ENCODE measurements at regions of chr16 and their contacts with region 1.

Region 1: GRCh38 chr16:28950648-28951409 is at the start of gene NFATC2IP:
- DNase-seq: peak; percentile 99
- H3K4me3 ChIP-seq: peak within 1 kb of the TSS; percentile 68 to 100 (median 94)
- H3K27ac ChIP-seq: peak within 1 kb of the TSS; percentile 74 to 95 (median 90)
- H3K4me1 ChIP-seq: peaks cover 10 to 55% (median 36%) of the 10 kb centered on the region in 6 donors
- H3K27me3 ChIP-seq: no peaks in the 10 kb centered on the region
- CTCF ChIP-seq: peak in 2 of 11 experiments; percentile 29 to 31
- POLR2A ChIP-seq: peak in 1 of 3 donors; percentile 63
- total RNA-seq, gene NFATC2IP: 44.3 to 63.5 (median 54.5) TPM

Region 2: DNA sequence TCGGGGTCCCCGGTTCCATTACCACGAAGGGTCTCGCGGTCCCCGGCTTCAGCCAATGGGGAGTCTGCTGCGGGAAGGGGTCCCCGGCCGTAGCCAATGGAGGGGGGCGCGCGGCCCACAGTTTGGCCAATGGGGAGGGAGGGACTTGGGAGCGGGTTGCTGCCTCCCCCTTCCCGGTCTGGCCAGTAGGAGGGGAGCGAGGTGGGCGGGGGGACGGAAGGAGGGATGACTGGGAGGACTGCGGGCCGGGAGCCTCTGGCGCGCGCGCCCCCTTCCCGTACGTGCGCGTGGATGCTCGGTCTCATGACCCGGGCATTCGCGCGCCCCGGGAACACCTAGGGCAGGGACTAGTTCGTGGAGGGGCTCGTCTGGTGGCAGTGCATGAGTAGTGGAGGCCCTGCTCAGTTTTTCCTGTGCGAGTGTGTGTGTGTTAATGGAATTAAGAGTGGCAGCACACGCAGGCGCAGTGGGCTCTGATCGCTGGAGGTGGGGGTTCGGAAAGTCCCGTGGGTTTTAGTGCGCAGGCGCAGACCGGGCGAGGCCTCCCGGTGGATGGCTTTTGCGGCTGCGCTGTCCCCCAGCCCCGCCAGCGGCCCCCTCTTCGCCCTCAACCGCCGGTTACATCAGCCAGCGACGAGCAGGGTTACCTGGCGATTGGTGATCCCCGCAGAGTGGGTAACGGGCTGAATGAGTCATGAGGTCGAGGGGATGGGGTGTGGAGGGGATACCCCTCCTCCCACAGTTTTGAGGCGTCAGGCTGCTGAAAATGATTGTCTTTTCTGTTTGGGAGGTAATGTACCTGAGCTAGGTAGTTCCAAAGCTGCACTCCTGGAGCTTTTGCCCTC is 126.7 kb before region 1 on chr16:
- intact Hi-C with region 1: loop called (anchors 5 kb)
- DNase-seq: peak; percentile 97
- H3K4me3 ChIP-seq: peak overlapping the region; percentile 92 to 100 (median 98)
- H3K27ac ChIP-seq: peak overlapping the region; percentile 96 to 100 (median 99)
- H3K4me1 ChIP-seq: peaks cover 13 to 72% (median 33%) of the 10 kb centered on the region in 6 donors
- H3K27me3 ChIP-seq: no peaks in the 10 kb centered on the region
- CTCF ChIP-seq: peak; percentile 10 to 68 (median 51)
- POLR2A ChIP-seq: peak in 1 of 3 donors; percentile 44